ENCODE measurements at regions of chr3 and their contacts with region 1.

Region 1: DNA sequence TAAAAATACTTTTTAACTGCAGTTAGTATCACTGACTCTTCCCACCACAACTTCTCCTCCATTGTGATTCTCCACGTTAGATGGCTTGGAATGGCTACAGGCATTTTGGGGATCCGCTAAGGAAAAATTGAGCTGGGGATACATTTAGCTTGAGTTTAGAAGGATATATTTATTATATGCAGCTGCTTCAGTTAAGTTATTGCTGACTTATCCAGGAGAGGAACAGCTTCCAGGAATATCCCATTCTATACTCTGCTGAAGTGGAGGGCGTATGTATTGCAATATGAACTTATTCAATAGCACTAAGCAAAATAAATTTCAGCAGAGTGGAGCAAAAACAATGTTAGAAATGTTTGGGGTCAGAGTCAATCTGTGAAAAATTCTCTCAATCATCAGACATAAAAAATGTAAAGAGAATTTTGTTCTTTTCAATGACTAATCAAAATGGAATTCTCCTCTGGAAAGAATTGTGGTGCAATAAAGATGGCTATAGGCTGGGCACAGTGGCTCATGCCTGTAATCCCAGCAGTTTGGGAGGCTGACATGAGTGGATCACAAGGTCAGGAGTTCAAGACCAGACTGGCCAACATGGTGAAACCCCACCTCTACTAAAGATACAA is 84.7 kb downstream of the NCEH1 start:
- DNase-seq: no peak
- ATAC-seq: no peak
- H3K4me3 Mint-ChIP-seq: no peak overlapping the region
- H3K27ac Mint-ChIP-seq: no peak overlapping the region
- H3K4me1 Mint-ChIP-seq: peaks cover 17% of the 10 kb centered on the region
- H3K27me3 Mint-ChIP-seq: no peaks in the 10 kb centered on the region
- CTCF ChIP-seq: no peak

Region 2: DNA sequence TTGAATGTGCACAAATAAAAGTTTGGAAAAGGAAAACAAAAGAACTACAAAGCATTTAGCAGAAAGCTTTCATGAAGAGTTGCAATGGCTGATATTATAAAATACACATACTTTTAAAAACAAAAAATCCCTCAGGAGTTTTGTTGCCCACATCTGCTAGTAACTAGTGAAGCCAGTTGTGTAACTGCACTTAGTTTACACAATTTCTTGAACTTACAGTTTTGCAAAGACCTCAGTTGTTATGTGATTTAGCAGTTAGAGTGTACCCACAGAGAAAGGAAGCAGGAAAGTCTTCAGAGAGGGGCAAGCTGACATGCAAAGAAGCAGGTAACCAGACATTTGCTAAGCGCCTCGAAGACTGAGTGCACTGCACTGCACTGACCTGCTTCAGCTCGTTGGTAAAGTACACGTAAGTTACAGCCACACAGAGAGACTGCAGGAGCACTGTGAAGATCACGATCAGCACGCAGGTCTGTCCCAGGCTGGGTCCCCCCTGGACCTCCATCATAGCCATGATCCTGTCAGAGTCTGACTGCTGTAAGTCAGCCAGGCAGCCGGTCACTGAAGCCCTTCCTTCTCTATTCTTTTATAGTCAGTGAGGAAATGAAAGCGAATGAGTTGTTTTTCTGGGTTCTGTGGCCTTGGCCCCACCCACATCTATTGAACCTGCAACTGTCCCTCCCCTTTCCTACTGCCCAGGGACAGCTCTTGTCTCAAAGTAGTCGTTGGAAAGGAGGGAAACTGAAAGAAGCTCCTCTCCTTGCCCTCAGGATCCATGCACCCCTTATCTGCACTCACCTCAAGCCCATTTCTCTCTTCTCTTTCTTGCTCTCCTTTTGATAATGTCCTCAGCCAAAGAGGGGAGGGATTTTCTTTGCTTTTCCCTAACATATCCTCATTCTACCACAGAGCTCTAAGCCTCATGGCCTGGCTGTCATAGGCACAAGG is 103.0 kb before region 1 on chr3 and contains the start of gene TNFSF10:
- CTCF ChIA-PET with region 1: no interaction called
- POLR2A ChIA-PET with region 1: interaction called, 11 read pairs
- DNase-seq: no peak
- ATAC-seq: peak; percentile 94
- H3K4me3 Mint-ChIP-seq: peak within 1 kb of the TSS; percentile 44
- H3K27ac Mint-ChIP-seq: peak within 1 kb of the TSS; percentile 20; the same call in 1 of the 2 replicates
- H3K4me1 Mint-ChIP-seq: peaks cover 13% of the 10 kb centered on the region
- H3K27me3 Mint-ChIP-seq: no peaks in the 10 kb centered on the region
- CTCF ChIP-seq: no peak
- total RNA-seq, gene TNFSF10: 0.22 to 0.39 TPM (median 0.27 TPM) in 3 replicates

Region 3: GRCh38 chr3:172562871-172563863 is 63.0 kb before region 1 on chr3:
- CTCF ChIA-PET with region 1: no interaction called
- POLR2A ChIA-PET with region 1: no interaction called
- DNase-seq: no peak
- ATAC-seq: 0 out of 2 replicates have a peak, but pooled peaks have one; percentile 26
- H3K4me3 Mint-ChIP-seq: no peak overlapping the region
- H3K27ac Mint-ChIP-seq: no peak overlapping the region; the same call in 1 of the 2 replicates
- H3K4me1 Mint-ChIP-seq: peaks cover 21% of the 10 kb centered on the region
- H3K27me3 Mint-ChIP-seq: no peaks in the 10 kb centered on the region
- CTCF ChIP-seq: no peak